ENCODE measurements at regions of chr5 and their contacts with region 1.

Region 1: GRCh38 chr5:51382763-51383490 is at the start of gene ISL1:
- DNase-seq: peak in 3 of 4 experiments; percentile 26 to 45 (median 34)
- ATAC-seq: peak; percentile 94
- H3K4me3 ChIP-seq: no peak within 1 kb of the TSS
- H3K27ac ChIP-seq: no peak within 1 kb of the TSS
- H3K4me1 ChIP-seq: peaks cover 0 to 9% of the 10 kb centered on the region in 2 experiments; a peak in 1 of 5 replicates
- H3K27me3 ChIP-seq: peaks cover 9 to 28% of the 10 kb centered on the region in 2 experiments; a peak in 4 of 5 replicates
- CTCF ChIP-seq: no peak
- EP300 ChIP-seq: no peak
- POLR2A ChIP-seq: no peak
- RAD21 ChIP-seq: no peak
- polyA plus RNA-seq, gene ISL1: not detected

Region 2: GRCh38 chr5:51279983-51280706 is 102.8 kb before region 1 on chr5:
- CTCF ChIA-PET with region 1: no interaction called
- POLR2A ChIA-PET with region 1: no interaction called
- in situ Hi-C with region 1: no loop called
- intact Hi-C with region 1: no loop called
- DNase-seq: no peak
- ATAC-seq: no peak
- H3K4me3 ChIP-seq: no peak overlapping the region
- H3K27ac ChIP-seq: no peak overlapping the region
- H3K4me1 ChIP-seq: no peaks in the 10 kb centered on the region
- H3K27me3 ChIP-seq: no peaks in the 10 kb centered on the region
- CTCF ChIP-seq: no peak
- EP300 ChIP-seq: no peak
- POLR2A ChIP-seq: no peak
- RAD21 ChIP-seq: no peak

Region 3: GRCh38 chr5:51398875-51399642 is 16.1 kb after region 1 on chr5:
- CTCF ChIA-PET with region 1: no interaction called
- POLR2A ChIA-PET with region 1: no interaction called
- in situ Hi-C with region 1: no loop called
- intact Hi-C with region 1: no loop called
- DNase-seq: no peak
- ATAC-seq: no peak
- H3K4me3 ChIP-seq: no peak overlapping the region
- H3K27ac ChIP-seq: no peak overlapping the region
- H3K4me1 ChIP-seq: peaks cover 0 to 6% of the 10 kb centered on the region in 2 experiments; a peak in 1 of 5 replicates
- H3K27me3 ChIP-seq: no peaks in the 10 kb centered on the region
- CTCF ChIP-seq: no peak
- EP300 ChIP-seq: no peak
- POLR2A ChIP-seq: no peak
- RAD21 ChIP-seq: no peak

Region 4: GRCh38 chr5:51518607-51519006 is 135.7 kb after region 1 on chr5:
- CTCF ChIA-PET with region 1: no interaction called
- POLR2A ChIA-PET with region 1: no interaction called
- in situ Hi-C with region 1: no loop called
- intact Hi-C with region 1: no loop called
- DNase-seq: no peak
- ATAC-seq: no peak
- H3K4me3 ChIP-seq: no peak overlapping the region
- H3K27ac ChIP-seq: no peak overlapping the region
- H3K4me1 ChIP-seq: no peaks in the 10 kb centered on the region
- H3K27me3 ChIP-seq: no peaks in the 10 kb centered on the region
- CTCF ChIP-seq: no peak
- EP300 ChIP-seq: no peak
- POLR2A ChIP-seq: no peak
- RAD21 ChIP-seq: no peak

Region 5: DNA sequence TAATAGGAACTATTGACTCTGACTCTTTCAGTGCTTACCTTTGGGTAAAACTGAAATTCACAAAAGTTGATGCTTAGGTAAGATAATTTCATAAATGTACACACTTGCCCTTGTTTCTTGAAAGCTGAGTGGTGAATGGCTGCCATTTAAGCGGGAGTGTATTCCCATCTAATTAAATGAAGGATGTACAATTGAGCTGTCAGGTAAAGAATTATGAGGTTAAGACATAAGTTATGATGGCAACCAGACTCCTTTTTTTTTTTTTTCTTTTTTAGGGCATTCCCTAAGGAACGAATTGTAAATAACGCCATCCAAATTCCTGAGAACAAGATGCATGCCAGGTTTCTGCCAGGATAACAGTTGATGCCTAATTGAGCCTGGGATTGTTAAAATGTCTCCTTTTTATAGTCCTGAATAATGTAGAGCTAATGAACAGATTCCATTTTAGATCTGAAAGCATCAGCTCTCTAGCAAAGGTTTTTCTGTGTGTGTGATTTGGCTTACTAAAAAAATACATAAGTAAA is 200.0 kb after region 1 on chr5:
- CTCF ChIA-PET with region 1: no interaction called
- POLR2A ChIA-PET with region 1: no interaction called
- in situ Hi-C with region 1: no loop called
- intact Hi-C with region 1: no loop called
- DNase-seq: no peak
- ATAC-seq: no peak
- H3K4me3 ChIP-seq: no peak overlapping the region
- H3K27ac ChIP-seq: no peak overlapping the region
- H3K4me1 ChIP-seq: no peaks in the 10 kb centered on the region
- H3K27me3 ChIP-seq: no peaks in the 10 kb centered on the region
- CTCF ChIP-seq: no peak
- EP300 ChIP-seq: no peak
- POLR2A ChIP-seq: no peak
- RAD21 ChIP-seq: no peak

Region 6: DNA sequence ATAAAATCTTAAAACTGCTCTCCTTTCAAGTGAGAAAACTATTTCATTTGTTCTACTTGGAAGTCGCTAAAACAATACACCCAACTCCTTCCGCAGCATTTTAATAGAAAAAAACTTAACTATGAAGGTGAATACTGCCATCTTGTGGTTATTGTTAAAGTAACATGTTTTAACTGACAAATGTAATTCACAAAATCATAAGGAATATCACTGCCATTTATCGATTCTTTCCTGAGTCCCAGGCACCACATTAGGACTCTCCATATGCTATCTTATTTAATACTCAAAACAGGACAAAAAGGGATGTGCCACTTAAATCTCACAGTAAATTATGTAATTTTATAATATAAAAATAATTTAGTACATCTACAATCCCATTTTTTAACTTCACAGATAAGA is 1274.3 kb after region 1 on chr5:
- CTCF ChIA-PET with region 1: no interaction called
- POLR2A ChIA-PET with region 1: no interaction called
- in situ Hi-C with region 1: loop called (anchors 25 kb)
- intact Hi-C with region 1: loop called (anchors 5 kb)
- DNase-seq: peak; percentile 10 to 22 (median 16)
- ATAC-seq: no peak
- H3K4me3 ChIP-seq: no peak overlapping the region
- H3K27ac ChIP-seq: no peak overlapping the region
- H3K4me1 ChIP-seq: no peaks in the 10 kb centered on the region
- H3K27me3 ChIP-seq: no peaks in the 10 kb centered on the region
- CTCF ChIP-seq: peak in 2 of 3 experiments; percentile 26 to 49; a peak in 3 of 6 replicates
- EP300 ChIP-seq: no peak
- POLR2A ChIP-seq: no peak
- RAD21 ChIP-seq: peak; percentile 54 to 67